Endothelial cell of umbilical vein (primary cell): ENCODE measurements at regions of chr2 and their contacts with region 1.

Region 1: GRCh38 chr2:127081826-127082633 is 24.9 kb downstream of the BIN1 start:
- DNase-seq: no peak
- H3K4me3 ChIP-seq: no peak overlapping the region
- H3K27ac ChIP-seq: no peak overlapping the region
- H3K4me1 ChIP-seq: peaks cover 24% of the 10 kb centered on the region
- H3K27me3 ChIP-seq: no peaks in the 10 kb centered on the region
- CTCF ChIP-seq: no peak
- POLR2A ChIP-seq: no peak

Region 2: GRCh38 chr2:127174136-127174535 is 92.1 kb after region 1 on chr2:
- CTCF ChIA-PET with region 1: interaction called, 3 read pairs
- POLR2A ChIA-PET with region 1: no interaction called
- dilution Hi-C with region 1: no loop called
- intact Hi-C with region 1: loop called (anchors 5 kb)
- DNase-seq: no peak
- H3K4me3 ChIP-seq: no peak overlapping the region
- H3K27ac ChIP-seq: no peak overlapping the region
- H3K4me1 ChIP-seq: no peaks in the 10 kb centered on the region
- H3K27me3 ChIP-seq: no peaks in the 10 kb centered on the region
- CTCF ChIP-seq: peak; percentile 8 to 60
- POLR2A ChIP-seq: no peak